Breast epithelium (tissue), 4 donors: ENCODE measurements at regions of chr7 and their contacts with region 1.

Region 1: GRCh38 chr7:107579885-107580715 is at the start of gene BCAP29:
- DNase-seq: peak; percentile 39 to 79
- H3K4me3 ChIP-seq: peak within 1 kb of the TSS; percentile 69 to 84 (median 81)
- H3K27ac ChIP-seq: peak within 1 kb of the TSS; percentile 93
- H3K4me1 ChIP-seq: peaks cover 0 to 6% of the 10 kb centered on the region in 2 donors
- H3K27me3 ChIP-seq: no peaks in the 10 kb centered on the region
- CTCF ChIP-seq: peak in 1 of 3 donors; percentile 44
- POLR2A ChIP-seq: peak; percentile 11
- total RNA-seq, gene BCAP29: 68.8 to 101 (median 78.2) TPM

Region 2: GRCh38 chr7:107596881-107597581 is 16.9 kb after region 1 on chr7:
- intact Hi-C with region 1: loop called (anchors 2 kb)
- DNase-seq: no peak
- H3K4me3 ChIP-seq: no peak overlapping the region
- H3K27ac ChIP-seq: no peak overlapping the region
- H3K4me1 ChIP-seq: no peaks in the 10 kb centered on the region
- H3K27me3 ChIP-seq: no peaks in the 10 kb centered on the region
- CTCF ChIP-seq: no peak
- POLR2A ChIP-seq: no peak

Region 3: GRCh38 chr7:108581639-108582491 is 1001.8 kb after region 1 on chr7:
- intact Hi-C with region 1: loop called (anchors 5 kb)
- DNase-seq: no peak
- H3K4me3 ChIP-seq: no peak overlapping the region
- H3K27ac ChIP-seq: peak overlapping the region; percentile 44 to 50
- H3K4me1 ChIP-seq: no peaks in the 10 kb centered on the region
- H3K27me3 ChIP-seq: no peaks in the 10 kb centered on the region
- CTCF ChIP-seq: no peak
- POLR2A ChIP-seq: no peak